ENCODE measurements at regions of chr2 and their contacts with region 1.

Region 1: GRCh38 chr2:199861132-199861774 is 10.3 kb upstream of the FTCDNL1 start:
- DNase-seq: no peak
- H3K4me3 Mint-ChIP-seq: no peak overlapping the region
- H3K27ac Mint-ChIP-seq: no peak overlapping the region
- H3K4me1 Mint-ChIP-seq: no peaks in the 10 kb centered on the region
- H3K27me3 Mint-ChIP-seq: peaks cover 47% of the 10 kb centered on the region

Region 2: DNA sequence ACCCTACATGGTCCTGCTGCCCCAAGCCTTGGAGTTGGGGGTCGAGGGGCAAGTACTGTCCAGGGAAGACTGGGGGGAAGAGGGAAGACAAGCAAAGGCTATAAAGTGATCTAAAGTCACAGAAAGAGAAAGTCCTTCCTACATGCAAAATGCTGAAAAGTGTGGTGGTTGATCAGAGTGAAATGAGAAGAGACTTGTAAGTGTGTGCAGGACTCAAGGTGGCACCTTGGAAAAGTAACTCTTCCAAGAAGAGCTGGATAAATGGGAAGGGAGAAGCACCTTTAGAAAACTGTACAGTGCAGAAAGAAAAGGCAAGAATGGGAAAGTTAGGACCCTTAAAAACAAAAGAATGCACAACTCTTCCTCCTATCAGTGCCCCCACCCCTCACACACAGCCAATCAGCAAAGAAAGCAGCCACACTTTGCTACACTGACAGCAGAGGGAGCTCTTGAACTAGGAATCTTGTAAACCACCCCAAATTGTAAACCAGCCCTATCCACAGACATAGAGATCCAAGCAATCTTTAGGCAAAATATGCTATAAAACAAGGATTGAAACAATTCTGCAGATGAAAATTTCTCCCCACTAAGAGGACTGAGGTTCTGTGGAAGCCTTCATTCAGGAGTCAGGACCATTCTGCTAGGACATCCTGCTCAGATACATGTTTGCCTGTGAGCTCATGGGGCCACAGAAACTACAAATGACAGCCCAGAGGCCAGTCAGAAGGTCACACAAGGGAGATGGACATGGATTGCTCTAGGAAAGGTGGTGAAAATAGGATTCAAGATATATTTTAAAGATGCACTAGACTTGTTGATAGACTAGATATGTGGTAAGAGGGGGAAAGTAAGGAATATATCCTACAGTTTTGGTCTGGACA is 156.7 kb before region 1 on chr2:
- intact Hi-C with region 1: loop called (anchors 1 kb)
- DNase-seq: no peak
- H3K4me3 Mint-ChIP-seq: no peak overlapping the region
- H3K27ac Mint-ChIP-seq: no peak overlapping the region
- H3K4me1 Mint-ChIP-seq: peaks cover 4% of the 10 kb centered on the region
- H3K27me3 Mint-ChIP-seq: peaks cover 8% of the 10 kb centered on the region

Region 3: GRCh38 chr2:199940373-199940772 is 79.1 kb after region 1 on chr2:
- intact Hi-C with region 1: loop called (anchors 5 kb)
- DNase-seq: no peak
- H3K4me3 Mint-ChIP-seq: no peak overlapping the region
- H3K27ac Mint-ChIP-seq: no peak overlapping the region
- H3K4me1 Mint-ChIP-seq: peaks cover 24% of the 10 kb centered on the region
- H3K27me3 Mint-ChIP-seq: no peaks in the 10 kb centered on the region